ENCODE measurements at regions of chr16 and their contacts with region 1.

Region 1: GRCh38 chr16:79066561-79066960 is 534.0 kb downstream of the MAF start:
- DNase-seq: no peak
- ATAC-seq: no peak
- H3K4me3 ChIP-seq: no peak overlapping the region
- H3K27ac ChIP-seq: no peak overlapping the region
- H3K4me1 ChIP-seq: peaks cover 0 to 5% (median 0%) of the 10 kb centered on the region in 9 donors
- H3K27me3 ChIP-seq: peaks cover 0 to 10% (median 0%) of the 10 kb centered on the region in 7 donors
- CTCF ChIP-seq: no peak

Region 2: GRCh38 chr16:78551487-78552085 is 515.0 kb before region 1 on chr16:
- intact Hi-C with region 1: no loop called
- DNase-seq: no peak
- ATAC-seq: no peak
- H3K4me3 ChIP-seq: no peak overlapping the region
- H3K27ac ChIP-seq: no peak overlapping the region
- H3K4me1 ChIP-seq: peaks cover 0 to 4% (median 0%) of the 10 kb centered on the region in 9 donors
- H3K27me3 ChIP-seq: no peaks in the 10 kb centered on the region
- CTCF ChIP-seq: no peak

Region 3: DNA sequence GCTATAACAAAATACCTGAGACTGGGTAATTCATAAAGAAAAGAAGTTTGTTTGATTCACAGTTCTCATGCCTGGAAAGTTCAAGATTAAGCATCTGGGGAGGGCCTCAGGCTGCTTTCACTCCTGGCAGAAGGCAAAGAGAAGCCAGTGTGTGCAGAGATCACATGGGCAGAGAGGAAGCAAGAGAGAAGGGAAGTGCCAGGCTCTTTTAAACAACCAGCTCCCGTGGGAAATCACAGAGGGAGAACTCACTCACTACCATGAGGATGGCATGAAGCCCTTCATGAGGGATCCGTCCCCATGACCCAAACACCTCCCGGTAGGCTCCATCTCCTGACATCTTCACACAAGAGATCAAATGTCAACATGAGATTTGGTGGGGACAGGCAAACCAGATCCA is 32.3 kb after region 1 on chr16:
- intact Hi-C with region 1: no loop called
- DNase-seq: no peak
- ATAC-seq: no peak
- H3K4me3 ChIP-seq: no peak overlapping the region
- H3K27ac ChIP-seq: no peak overlapping the region
- H3K4me1 ChIP-seq: peaks cover 0 to 21% (median 0%) of the 10 kb centered on the region in 9 donors
- H3K27me3 ChIP-seq: peaks cover 0 to 5% (median 0%) of the 10 kb centered on the region in 7 donors
- CTCF ChIP-seq: no peak

Region 4: DNA sequence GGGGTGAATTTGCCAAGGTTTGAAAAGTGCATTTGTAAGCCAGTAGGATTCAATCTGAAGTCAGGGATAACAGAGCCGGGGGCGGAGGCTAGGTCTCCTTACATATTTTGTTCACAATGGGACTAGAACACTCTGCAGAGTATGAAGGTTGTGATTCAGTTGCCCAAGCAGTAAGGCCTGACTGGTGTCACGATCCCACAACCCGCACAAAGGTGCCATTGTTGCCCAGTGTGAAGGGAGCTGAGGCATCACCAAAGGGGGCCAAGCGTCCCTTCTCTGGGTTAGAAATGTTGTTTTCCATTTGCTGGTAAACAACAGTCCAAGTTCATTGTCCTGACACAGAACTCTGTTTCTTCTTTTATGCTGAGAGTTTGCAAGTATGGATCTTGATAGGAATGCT is 62.1 kb after region 1 on chr16:
- intact Hi-C with region 1: loop called in 1 of 10 experiments (anchors 10 kb)
- DNase-seq: no peak
- ATAC-seq: no peak
- H3K4me3 ChIP-seq: no peak overlapping the region
- H3K27ac ChIP-seq: no peak overlapping the region
- H3K4me1 ChIP-seq: no peaks in the 10 kb centered on the region
- H3K27me3 ChIP-seq: no peaks in the 10 kb centered on the region
- CTCF ChIP-seq: no peak

Measured in heart right ventricle (tissue), 16 donors.